Activated T-helper 2 cell treated with anti-CD3 and anti-CD28 coated beads, Interferon-gamma antibody, Interleukin-2, Interleukin-4, amounts not matched to agents 10 μg/mL and 5 μg/mL and 100 μg/mL, durations not matched to agents 14 hours and 24 hours and 36 hours (primary cell): ENCODE measurements at regions of chr2 and their contacts with region 1.

Region 1: DNA sequence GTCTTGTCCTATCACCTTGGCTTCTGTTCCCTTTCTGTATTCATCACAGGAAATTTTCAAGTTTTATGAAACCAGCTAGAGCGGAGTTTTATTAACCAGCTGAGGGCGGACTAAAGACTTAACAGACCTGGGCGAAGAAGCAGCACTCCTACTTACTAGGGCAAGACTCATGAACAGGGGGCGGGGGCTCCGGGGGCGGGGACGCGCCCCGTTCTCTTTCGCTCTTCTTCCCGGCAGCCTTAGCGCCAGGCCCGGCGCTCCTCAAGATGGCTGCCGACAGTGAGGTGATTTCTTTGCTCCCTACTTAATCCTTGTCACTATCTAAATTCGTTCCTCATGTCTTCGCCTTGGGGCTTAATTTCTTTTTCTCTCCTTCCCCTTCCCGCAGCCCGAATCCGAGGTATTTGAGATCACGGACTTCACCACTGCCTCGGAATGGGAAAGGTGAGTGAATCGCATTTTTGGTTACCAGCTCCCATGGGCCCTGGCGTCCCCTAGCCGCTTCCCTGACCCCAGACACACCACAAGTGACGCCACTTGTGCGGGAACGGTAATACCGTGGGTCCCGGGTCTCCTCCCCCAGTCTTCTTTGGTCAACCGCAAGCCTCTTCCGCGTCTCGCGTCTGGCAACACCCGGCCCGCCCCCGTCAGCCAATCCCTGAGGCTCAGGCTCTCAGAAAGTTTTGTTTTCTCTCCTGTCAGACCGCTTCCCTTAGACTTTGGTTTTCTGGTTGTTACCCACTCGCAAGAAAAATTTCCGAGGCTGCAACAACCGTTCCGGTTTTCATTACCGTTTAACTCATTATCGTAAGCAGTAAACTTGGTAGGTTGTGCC is at the start of gene RAB3GAP1:
- DNase-seq: peak; percentile 91
- H3K4me3 Mint-ChIP-seq: peak within 1 kb of the TSS; percentile 96
- H3K27ac Mint-ChIP-seq: peak within 1 kb of the TSS; percentile 100
- H3K4me1 Mint-ChIP-seq: peaks cover 47% of the 10 kb centered on the region
- H3K27me3 Mint-ChIP-seq: no peaks in the 10 kb centered on the region
- total RNA-seq, gene RAB3GAP1: 26.6 and 30.8 TPM in 2 replicates

Region 2: GRCh38 chr2:134137182-134137611 is 915.1 kb before region 1 on chr2:
- intact Hi-C with region 1: no loop called
- DNase-seq: no peak
- H3K4me3 Mint-ChIP-seq: no peak overlapping the region
- H3K27ac Mint-ChIP-seq: no peak overlapping the region
- H3K4me1 Mint-ChIP-seq: peaks cover 12% of the 10 kb centered on the region
- H3K27me3 Mint-ChIP-seq: no peaks in the 10 kb centered on the region

Region 3: DNA sequence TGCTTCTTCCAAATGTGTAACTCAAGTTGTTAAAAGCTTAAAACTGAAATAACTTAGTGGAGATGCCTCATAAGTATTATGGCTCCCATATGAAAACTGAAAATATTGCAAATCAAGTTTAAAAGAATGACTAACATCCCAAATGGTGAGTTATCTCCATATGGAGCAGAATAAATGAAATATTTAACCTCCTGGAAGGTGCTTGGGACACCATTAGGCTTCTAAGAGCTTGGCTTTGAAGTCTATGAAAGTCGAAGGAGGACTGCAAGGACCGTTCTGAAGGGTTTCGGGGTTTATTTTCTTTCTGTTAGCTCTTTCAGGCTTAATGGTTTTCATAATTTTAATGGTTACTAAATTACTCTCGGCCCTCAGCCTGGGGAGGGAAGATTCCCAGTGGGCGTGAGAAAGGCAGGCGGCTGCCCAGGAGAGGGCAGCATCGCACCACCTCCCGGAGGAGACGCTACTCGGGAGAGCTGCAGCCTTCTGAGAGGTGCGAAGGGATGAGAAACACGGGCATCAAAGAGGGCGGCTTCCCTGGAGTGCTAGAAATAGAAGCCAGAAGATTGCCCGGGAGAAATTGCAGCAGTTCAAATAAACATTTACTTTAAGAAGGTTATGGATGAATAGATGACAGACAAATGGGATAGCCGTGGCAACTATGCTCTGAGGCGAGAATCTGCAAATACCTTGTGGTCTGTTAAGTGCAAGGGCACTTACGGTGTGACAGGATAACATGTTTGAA is 48.1 kb before region 1 on chr2:
- intact Hi-C with region 1: loop called (anchors 5 kb)
- DNase-seq: peak; percentile 57
- H3K4me3 Mint-ChIP-seq: no peak overlapping the region
- H3K27ac Mint-ChIP-seq: no peak overlapping the region
- H3K4me1 Mint-ChIP-seq: peaks cover 4% of the 10 kb centered on the region
- H3K27me3 Mint-ChIP-seq: peaks cover 28% of the 10 kb centered on the region

Region 4: GRCh38 chr2:135030826-135031225 is 21.4 kb before region 1 on chr2:
- intact Hi-C with region 1: no loop called
- DNase-seq: no peak
- H3K4me3 Mint-ChIP-seq: no peak overlapping the region
- H3K27ac Mint-ChIP-seq: no peak overlapping the region
- H3K4me1 Mint-ChIP-seq: no peaks in the 10 kb centered on the region
- H3K27me3 Mint-ChIP-seq: peaks cover 2% of the 10 kb centered on the region

Region 5: DNA sequence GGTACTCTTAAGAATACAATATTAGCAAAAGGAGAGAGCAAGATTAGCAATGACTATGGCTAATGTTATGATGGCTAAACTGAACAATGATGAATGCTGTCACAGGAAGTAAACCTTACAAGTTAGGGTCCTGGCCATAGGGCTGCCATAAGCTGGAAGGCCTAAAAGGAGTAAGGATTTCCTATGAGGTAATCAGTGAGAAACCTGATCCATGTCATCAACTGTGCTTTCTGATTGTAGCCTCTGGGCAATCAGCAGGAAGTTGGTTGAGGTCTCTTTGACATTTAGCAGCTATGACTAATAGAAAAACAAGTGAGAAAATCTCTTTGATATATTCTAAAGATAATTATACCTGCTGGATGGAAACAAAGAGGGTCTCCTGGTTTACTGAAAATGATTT is 192.8 kb after region 1 on chr2:
- intact Hi-C with region 1: loop called (anchors 2 kb)
- DNase-seq: peak; percentile 16
- H3K4me3 Mint-ChIP-seq: no peak overlapping the region
- H3K27ac Mint-ChIP-seq: peak overlapping the region; percentile 82
- H3K4me1 Mint-ChIP-seq: peaks cover 24% of the 10 kb centered on the region
- H3K27me3 Mint-ChIP-seq: no peaks in the 10 kb centered on the region

Region 6: GRCh38 chr2:135664623-135665068 is 612.4 kb after region 1 on chr2:
- intact Hi-C with region 1: loop called (anchors 2 kb)
- DNase-seq: no peak
- H3K4me3 Mint-ChIP-seq: no peak overlapping the region
- H3K27ac Mint-ChIP-seq: peak overlapping the region; percentile 77
- H3K4me1 Mint-ChIP-seq: peaks cover 37% of the 10 kb centered on the region
- H3K27me3 Mint-ChIP-seq: no peaks in the 10 kb centered on the region

Region 7: DNA sequence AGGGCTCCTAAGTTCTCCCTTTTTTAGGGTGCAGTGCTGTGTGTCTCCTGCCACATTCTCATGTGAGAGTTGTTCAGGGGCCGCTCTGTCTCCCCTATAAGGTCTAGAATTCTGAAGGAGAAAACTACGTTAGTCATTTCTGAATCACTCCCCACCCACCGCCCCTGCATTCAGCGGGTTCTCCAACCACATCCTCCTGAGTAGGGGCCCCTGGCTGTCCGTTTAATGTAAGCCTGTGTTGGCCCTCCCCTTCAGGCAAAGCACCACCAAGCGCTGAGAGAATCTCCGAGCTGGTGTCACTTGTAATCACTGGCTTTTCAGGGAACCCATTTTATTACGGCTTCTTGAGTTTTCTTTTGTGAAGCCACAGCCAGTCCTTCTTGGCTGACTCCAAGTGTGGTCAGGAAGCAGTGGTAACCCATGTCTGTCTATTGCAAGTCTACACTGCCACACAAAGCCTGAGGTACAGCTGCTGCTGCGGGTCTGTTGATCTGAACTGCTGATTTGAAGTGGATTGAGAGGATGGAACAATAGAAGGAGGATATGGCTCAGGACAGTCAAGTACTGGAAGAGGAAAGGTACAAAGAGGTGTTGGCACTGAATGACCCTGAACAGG is 767.9 kb after region 1 on chr2:
- intact Hi-C with region 1: loop called (anchors 1 kb)
- DNase-seq: peak; percentile 80
- H3K4me3 Mint-ChIP-seq: peak overlapping the region; percentile 71
- H3K27ac Mint-ChIP-seq: peak overlapping the region; percentile 87
- H3K4me1 Mint-ChIP-seq: peaks cover 39% of the 10 kb centered on the region
- H3K27me3 Mint-ChIP-seq: no peaks in the 10 kb centered on the region